Activated CD8-positive, alpha-beta memory T cell treated with anti-CD3 and anti-CD28 coated beads, Interleukin-2, amount 10 ng/mL, durations not matched to agents 7 days and 5 days (primary cell): ENCODE measurements at regions of chr2 and their contacts with region 1.

Region 1: DNA sequence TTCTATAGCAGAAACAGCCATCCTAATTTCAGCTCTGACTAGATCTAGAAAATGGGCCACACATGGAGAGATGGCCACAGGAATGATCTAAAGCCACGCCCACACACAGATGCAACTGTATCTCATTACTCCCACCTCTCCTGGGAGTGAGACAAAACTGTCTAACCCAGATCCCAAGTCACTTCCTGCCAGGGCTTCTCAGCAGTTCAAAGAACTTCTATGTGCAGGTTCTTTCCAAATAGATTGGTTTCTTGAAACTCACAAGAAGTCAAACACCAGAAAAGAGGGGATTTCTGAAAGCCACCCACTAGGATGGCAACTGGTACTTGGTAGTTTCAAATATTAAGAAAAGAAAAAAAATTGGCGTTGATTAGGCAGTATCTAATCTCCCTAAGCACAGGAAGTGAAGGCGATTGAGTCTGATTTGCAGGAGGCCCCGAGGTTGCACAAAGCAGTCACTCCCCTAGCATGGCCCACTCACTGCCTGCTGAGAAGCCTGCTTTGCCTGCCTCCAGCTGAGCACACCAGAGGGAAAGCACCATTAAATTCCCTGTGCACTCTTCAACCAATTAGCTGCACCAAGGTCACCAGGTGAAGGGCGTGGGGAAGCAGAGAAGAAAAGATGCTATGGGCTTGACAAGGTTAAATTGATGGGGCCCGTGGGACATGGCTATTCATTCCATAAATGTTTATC is 51.1 kb downstream of the PAPOLG start:
- DNase-seq: peak; percentile 47
- ATAC-seq: peak; percentile 69
- H3K4me3 Mint-ChIP-seq: no peak overlapping the region
- H3K27ac Mint-ChIP-seq: peak overlapping the region; percentile 53
- H3K4me1 Mint-ChIP-seq: peaks cover 14% of the 10 kb centered on the region
- H3K27me3 Mint-ChIP-seq: no peaks in the 10 kb centered on the region

Region 2: GRCh38 chr2:60818272-60818671 is 11.1 kb after region 1 on chr2:
- CTCF ChIA-PET with region 1: interaction called, 10 read pairs
- DNase-seq: peak; percentile 48
- ATAC-seq: no peak
- H3K4me3 Mint-ChIP-seq: no peak overlapping the region
- H3K27ac Mint-ChIP-seq: peak overlapping the region; percentile 20
- H3K4me1 Mint-ChIP-seq: peaks cover 34% of the 10 kb centered on the region
- H3K27me3 Mint-ChIP-seq: no peaks in the 10 kb centered on the region